ENCODE measurements at regions of chr5 and their contacts with region 1.

Region 1: DNA sequence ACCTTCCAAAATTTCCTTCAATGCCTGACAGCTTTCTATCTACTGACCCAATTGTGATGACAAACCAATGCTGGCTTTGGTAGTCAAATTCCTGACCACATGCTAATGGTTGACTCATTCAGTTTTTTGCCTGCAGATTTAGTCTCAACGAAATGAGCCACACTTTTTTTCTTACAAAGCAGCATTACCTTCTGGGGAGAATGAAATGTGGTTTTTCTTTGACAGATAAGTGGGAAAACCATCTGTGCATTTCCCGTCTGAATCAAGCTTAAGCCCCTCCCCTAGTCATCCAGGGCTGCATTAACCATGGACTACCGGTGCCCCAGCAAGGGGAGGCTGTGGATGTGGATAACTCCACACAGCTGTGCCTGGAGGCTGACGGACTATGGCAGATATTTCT is 99.6 kb upstream of the TAF11L2 start:
- DNase-seq: peak in 1 of 4 experiments; percentile 4
- ATAC-seq: peak; percentile 36; the same call in 1 of the 3 replicates
- H3K4me3 ChIP-seq: no peak overlapping the region
- H3K27ac ChIP-seq: no peak overlapping the region
- H3K4me1 ChIP-seq: peaks cover 0 to 13% of the 10 kb centered on the region in 2 experiments; a peak in 2 of 5 replicates
- H3K27me3 ChIP-seq: no peaks in the 10 kb centered on the region; a peak in 1 of 5 replicates
- CTCF ChIP-seq: no peak
- EP300 ChIP-seq: no peak
- POLR2A ChIP-seq: no peak
- RAD21 ChIP-seq: no peak

Region 2: GRCh38 chr5:17305964-17306716 is 92.3 kb before region 1 on chr5:
- CTCF ChIA-PET with region 1: no interaction called
- POLR2A ChIA-PET with region 1: no interaction called
- in situ Hi-C with region 1: no loop called
- intact Hi-C with region 1: no loop called
- DNase-seq: no peak
- ATAC-seq: no peak; the same call in 2 of the 3 replicates
- H3K4me3 ChIP-seq: no peak overlapping the region
- H3K27ac ChIP-seq: no peak overlapping the region
- H3K4me1 ChIP-seq: peaks cover 0 to 5% of the 10 kb centered on the region in 2 experiments; a peak in 1 of 5 replicates
- H3K27me3 ChIP-seq: 0 out of 5 replicates have a peak, but pooled peaks cover 0 to 6% of the 10 kb centered on the region in 2 experiments
- CTCF ChIP-seq: no peak
- EP300 ChIP-seq: no peak
- POLR2A ChIP-seq: no peak
- RAD21 ChIP-seq: no peak

Region 3: DNA sequence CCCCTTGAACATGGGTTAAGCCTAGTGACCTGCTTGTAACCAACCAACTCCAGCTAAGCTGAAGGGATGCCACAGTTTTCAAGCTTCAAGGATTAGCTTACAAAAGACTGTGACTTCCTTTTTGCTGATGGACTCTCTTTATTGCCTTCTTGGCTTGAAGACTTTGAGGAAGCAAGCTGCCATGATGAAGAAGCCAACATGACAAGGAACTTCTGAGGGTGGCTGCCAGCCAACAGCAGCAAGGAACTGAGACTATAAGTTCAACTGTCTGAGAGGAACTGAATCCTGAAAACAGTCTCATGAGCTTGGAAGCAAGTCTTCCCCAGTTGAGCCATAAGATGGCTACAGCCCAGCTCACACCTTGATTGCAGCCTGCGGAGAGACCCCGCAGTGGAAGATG is 16.5 kb before region 1 on chr5:
- CTCF ChIA-PET with region 1: no interaction called
- POLR2A ChIA-PET with region 1: no interaction called
- in situ Hi-C with region 1: no loop called
- intact Hi-C with region 1: no loop called
- DNase-seq: no peak
- ATAC-seq: no peak
- H3K4me3 ChIP-seq: no peak overlapping the region
- H3K27ac ChIP-seq: no peak overlapping the region
- H3K4me1 ChIP-seq: no peaks in the 10 kb centered on the region
- H3K27me3 ChIP-seq: no peaks in the 10 kb centered on the region; a peak in 1 of 5 replicates
- CTCF ChIP-seq: no peak
- EP300 ChIP-seq: no peak
- POLR2A ChIP-seq: no peak
- RAD21 ChIP-seq: no peak

Region 4: GRCh38 chr5:18920966-18921365 is 1522.5 kb after region 1 on chr5:
- CTCF ChIA-PET with region 1: no interaction called
- POLR2A ChIA-PET with region 1: no interaction called
- in situ Hi-C with region 1: loop called (anchors 25 kb)
- intact Hi-C with region 1: no loop called
- DNase-seq: peak in 2 of 4 experiments; percentile 3 to 31
- ATAC-seq: no peak
- H3K4me3 ChIP-seq: no peak overlapping the region
- H3K27ac ChIP-seq: no peak overlapping the region
- H3K4me1 ChIP-seq: no peaks in the 10 kb centered on the region
- H3K27me3 ChIP-seq: no peaks in the 10 kb centered on the region
- CTCF ChIP-seq: no peak
- EP300 ChIP-seq: no peak
- POLR2A ChIP-seq: no peak
- RAD21 ChIP-seq: no peak

Measured in K562 (cell line).